Right ventricle myocardium superior (tissue), 1 donor: ENCODE measurements at regions of chr9 and their contacts with region 1.

Region 1: DNA sequence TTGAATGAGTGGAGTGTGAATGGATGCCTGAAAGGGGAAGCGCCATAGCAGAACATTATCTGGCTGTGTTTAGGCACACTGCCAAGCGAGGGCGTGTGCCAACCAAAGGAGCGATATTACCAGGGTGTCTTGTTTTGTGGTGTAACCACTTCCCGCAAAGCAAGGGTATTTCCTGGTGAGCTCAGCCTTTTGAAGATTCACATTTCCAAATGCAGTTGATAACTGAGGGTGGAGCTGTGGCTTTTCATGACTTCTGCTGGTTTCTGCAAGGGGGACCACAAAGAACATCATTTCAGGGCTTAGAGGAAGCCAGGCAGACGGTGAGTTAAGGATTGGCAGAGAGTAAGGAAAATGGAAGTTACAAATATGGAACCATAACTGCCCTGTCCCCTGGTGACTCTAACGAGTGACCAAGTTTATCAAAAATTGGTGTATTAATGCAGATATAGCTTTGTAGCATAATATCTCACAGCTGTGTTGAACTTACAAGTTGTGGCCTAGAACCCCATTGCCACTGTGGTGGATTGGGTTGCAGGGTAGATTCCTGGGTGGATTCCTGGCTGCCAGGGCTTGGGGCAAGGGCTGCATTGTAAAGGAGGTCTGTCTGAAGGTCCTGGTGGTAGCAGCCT is 71.4 kb downstream of the RALGPS1 start:
- DNase-seq: peak; percentile 87
- ATAC-seq: peak; percentile 78

Region 2: DNA sequence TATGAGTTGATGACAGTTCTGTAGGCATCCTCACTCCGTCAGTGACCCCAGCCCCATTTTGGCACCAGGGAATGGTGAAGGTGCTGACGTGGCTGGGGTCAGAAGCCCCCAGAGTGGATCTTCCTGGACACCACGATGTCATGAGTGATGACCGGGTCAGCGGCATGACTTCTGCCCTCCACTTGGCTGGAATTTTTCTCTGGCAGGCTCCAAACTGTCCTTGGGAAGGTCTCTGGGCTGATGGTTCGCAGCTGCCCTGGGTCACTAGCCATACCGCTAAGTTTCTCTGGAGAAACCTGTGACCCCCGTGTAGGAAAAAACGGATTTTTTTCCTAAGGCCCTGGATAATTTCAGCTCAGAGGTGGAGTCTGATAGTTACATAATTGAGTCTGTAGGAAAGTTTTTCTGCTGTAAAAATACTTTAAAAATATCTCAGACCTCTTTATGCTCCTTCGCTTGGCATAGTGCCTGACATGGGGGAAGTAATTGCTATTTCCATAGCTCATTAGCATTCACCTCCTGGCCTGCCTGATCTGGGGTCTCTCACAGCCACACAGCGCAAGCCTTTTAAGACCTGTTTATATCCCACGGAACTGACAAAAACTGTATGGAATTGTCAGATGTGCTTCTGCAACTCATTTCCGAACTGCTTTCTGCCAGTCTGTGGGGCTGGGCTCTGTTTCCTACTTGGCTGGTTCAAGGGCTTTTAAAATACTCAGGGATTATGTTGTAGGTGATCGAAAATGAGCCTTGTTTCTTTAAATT is 67.3 kb after region 1 on chr9:
- intact Hi-C with region 1: loop called (anchors 10 kb)
- DNase-seq: peak; percentile 46
- ATAC-seq: peak; percentile 11

Region 3: GRCh38 chr9:127074561-127075548 is 88.9 kb after region 1 on chr9:
- intact Hi-C with region 1: no loop called
- DNase-seq: no peak
- ATAC-seq: peak; percentile 97